ENCODE measurements at regions of chr1 and their contacts with region 1.

Region 1: GRCh38 chr1:245156081-245156735 is 1.4 kb downstream of the KIF26B start:
- DNase-seq: peak; percentile 78
- H3K4me3 Mint-ChIP-seq: peak overlapping the region; percentile 77
- H3K27ac Mint-ChIP-seq: no peak overlapping the region
- H3K4me1 Mint-ChIP-seq: peaks cover 13% of the 10 kb centered on the region
- H3K27me3 Mint-ChIP-seq: peaks cover 62% of the 10 kb centered on the region

Region 2: GRCh38 chr1:244864253-244865027 is 291.8 kb before region 1 on chr1 and contains the start of gene HNRNPU:
- intact Hi-C with region 1: loop called (anchors 10 kb)
- DNase-seq: peak; percentile 97
- H3K4me3 Mint-ChIP-seq: peak within 1 kb of the TSS; percentile 87
- H3K27ac Mint-ChIP-seq: peak within 1 kb of the TSS; percentile 95
- H3K4me1 Mint-ChIP-seq: peaks cover 41% of the 10 kb centered on the region
- H3K27me3 Mint-ChIP-seq: no peaks in the 10 kb centered on the region
- total RNA-seq, gene HNRNPU: 566 and 573 TPM in 2 replicates

Region 3: DNA sequence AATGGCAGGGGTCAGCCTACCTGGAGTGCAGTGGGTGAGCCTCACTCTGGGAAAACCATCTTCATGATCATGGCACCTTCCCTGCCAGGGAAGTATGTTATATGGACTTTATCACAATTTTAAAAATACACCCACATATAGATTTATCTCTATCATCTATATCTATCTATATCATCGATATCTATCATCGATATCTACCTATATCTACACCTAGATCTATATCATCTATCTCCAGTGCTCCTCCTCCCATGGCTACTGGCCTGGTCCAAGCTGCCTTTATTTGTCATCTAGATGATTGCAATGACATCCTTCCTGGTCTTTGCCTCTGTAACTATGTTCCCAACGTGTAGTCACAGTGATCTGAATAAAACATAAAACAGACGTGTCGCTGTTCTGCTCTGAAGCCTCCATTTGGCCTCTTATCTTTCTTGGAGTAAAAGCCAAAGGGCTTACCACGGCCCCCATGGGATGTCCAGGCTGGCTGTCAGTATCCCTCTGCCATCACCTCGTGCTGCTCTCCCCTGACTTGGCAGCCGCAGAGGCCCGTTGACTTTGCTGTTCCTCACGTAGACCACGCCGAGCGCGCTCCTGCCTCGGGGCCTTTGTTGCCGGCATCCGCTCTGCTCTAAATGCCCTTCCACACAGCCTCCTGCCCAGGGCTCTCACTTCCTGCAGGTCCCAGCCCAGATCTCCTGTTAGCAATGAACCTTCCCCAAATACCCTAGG is 22.1 kb before region 1 on chr1:
- intact Hi-C with region 1: no loop called
- DNase-seq: no peak
- H3K4me3 Mint-ChIP-seq: no peak overlapping the region
- H3K27ac Mint-ChIP-seq: no peak overlapping the region
- H3K4me1 Mint-ChIP-seq: no peaks in the 10 kb centered on the region
- H3K27me3 Mint-ChIP-seq: peaks cover 6% of the 10 kb centered on the region

Region 4: DNA sequence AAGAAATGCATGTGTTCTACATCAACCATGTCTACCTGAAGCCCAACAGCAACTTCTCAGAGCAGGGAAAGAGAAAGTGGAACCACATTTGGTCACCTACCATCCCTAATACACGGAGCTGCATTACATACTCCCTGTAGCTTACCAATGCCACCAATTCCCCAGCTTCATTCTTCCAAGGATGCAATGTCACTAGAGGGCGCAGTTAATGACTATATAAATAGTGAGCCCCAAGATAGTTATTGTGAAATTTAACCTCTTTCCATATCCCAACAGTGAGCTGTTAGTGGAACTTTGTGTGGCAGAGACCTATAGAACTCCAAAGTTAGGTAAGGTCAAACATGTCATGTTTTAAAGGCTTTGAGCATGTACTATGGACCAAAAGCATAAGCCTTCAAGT is 732.6 kb after region 1 on chr1:
- intact Hi-C with region 1: loop called (anchors 10 kb)
- DNase-seq: no peak
- H3K4me3 Mint-ChIP-seq: no peak overlapping the region
- H3K27ac Mint-ChIP-seq: no peak overlapping the region
- H3K4me1 Mint-ChIP-seq: no peaks in the 10 kb centered on the region
- H3K27me3 Mint-ChIP-seq: no peaks in the 10 kb centered on the region

Region 5: GRCh38 chr1:246002725-246003441 is 846.7 kb after region 1 on chr1:
- intact Hi-C with region 1: loop called (anchors 1 kb)
- DNase-seq: peak; percentile 52
- H3K4me3 Mint-ChIP-seq: no peak overlapping the region
- H3K27ac Mint-ChIP-seq: no peak overlapping the region
- H3K4me1 Mint-ChIP-seq: no peaks in the 10 kb centered on the region
- H3K27me3 Mint-ChIP-seq: no peaks in the 10 kb centered on the region

Region 6: GRCh38 chr1:246329900-246330299 is 1173.7 kb after region 1 on chr1:
- intact Hi-C with region 1: loop called (anchors 10 kb)
- DNase-seq: peak; percentile 41
- H3K4me3 Mint-ChIP-seq: peak overlapping the region; percentile 53
- H3K27ac Mint-ChIP-seq: peak overlapping the region; percentile 65
- H3K4me1 Mint-ChIP-seq: peaks cover 50% of the 10 kb centered on the region
- H3K27me3 Mint-ChIP-seq: no peaks in the 10 kb centered on the region

Region 7: DNA sequence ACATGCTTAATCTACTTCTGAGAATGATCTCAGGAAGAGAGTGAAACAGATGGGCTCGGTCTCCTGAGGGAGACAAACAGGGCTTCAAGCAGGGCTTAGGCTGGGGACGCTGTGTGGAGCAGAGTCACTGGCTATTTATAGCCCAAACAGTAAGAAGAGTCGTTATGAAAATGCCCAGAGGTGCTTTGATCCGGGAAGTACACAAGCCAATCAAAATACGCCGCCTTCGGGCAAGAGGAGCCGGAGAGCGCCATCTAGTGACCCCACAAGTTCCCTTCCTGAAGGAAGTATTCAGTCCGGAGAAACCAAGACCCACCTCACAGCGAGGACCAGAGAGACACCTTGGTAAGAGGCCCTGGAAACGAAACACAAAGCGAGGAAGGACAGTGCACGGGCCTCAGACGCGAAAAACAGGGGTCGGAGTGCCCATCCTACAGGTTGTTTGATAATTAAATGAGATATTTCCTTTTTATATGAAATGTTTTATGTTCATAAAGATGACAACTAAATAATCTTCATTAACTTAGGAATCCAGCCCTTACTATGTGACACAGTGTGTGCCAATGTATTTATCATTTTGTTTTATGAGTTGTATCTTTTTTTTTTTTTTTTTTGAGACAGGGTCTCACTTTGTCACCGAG is 1543.0 kb after region 1 on chr1:
- intact Hi-C with region 1: loop called (anchors 10 kb)
- DNase-seq: peak; percentile 71
- H3K4me3 Mint-ChIP-seq: no peak overlapping the region
- H3K27ac Mint-ChIP-seq: no peak overlapping the region
- H3K4me1 Mint-ChIP-seq: peaks cover 6% of the 10 kb centered on the region
- H3K27me3 Mint-ChIP-seq: peaks cover 2% of the 10 kb centered on the region

Measured in activated T-helper 1 cell treated with anti-CD3 and anti-CD28 coated beads, Interleukin-12 subunit alpha, Interleukin-12 subunit beta, Interleukin-2, Interleukin-4 antibody, amounts not matched to agents 30 ng/mL and 10 ng/mL and 1 ng/mL, durations not matched to agents 14 hours and 24 hours and 36 hours (primary cell).